ENCODE measurements at regions of chr22 and their contacts with region 1.

Region 1: DNA sequence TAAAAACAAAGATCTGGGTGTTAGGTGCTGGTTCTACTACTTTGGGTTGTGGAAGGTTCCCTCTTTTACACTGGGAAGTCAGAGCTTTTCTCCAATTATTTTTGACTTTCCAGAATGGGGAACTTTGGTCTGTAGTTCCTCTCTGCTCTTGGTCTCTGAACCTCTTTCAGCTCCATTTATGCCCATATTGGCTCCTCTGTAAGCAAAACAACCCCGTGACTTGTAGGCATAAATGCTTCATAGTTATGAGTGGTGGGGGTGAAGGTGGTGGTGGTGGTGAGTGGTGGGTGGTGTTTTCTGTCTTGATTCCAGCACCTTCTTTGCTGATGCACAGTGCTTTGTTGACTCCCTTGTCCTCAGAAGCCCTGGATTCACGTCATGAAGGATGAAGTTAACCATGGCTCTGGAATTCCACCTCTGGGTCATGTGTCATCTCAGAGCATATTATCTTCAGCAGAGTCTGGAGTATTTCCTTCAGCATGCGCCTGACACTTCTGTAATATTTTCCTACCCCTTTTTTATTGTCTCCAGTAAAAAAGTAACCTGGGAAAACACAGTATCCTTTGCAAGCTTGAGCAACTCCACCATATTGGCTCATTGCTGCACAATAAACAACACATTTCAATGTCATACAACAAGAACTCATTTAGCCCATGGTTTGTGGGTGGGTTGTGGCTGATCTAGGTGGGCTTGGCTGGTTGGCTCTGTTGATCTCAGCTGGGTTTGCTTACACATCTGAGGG is 24.1 kb upstream of the GRK3 start:
- DNase-seq: no peak
- H3K4me3 ChIP-seq: no peak overlapping the region
- H3K27ac ChIP-seq: no peak overlapping the region
- H3K4me1 ChIP-seq: no peaks in the 10 kb centered on the region
- H3K27me3 ChIP-seq: no peaks in the 10 kb centered on the region
- CTCF ChIP-seq: no peak

Region 2: DNA sequence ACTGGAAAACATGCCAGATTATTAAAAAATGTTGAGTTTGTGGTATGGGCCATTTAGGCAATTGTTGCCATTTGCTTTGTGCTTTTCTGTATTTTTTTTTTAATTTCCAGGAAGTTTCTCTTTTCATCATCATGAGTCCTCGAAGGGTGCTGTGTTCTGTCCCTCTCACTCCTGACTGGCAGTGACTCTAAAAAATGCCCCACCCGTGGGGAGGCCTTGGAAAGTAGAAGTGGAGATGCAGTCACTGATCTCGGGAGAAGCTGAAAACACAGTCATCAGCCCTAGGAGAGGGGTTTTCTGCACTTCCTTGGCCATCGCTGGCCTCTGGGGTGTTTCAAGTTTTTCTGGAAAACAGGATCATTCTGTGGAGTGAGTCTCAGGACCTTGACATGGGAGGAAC is 74.4 kb before region 1 on chr22:
- CTCF ChIA-PET with region 1: no interaction called
- dilution Hi-C with region 1: no loop called
- in situ Hi-C with region 1: no loop called
- intact Hi-C with region 1: loop called (anchors 5 kb)
- DNase-seq: no peak
- H3K4me3 ChIP-seq: no peak overlapping the region
- H3K27ac ChIP-seq: no peak overlapping the region
- H3K4me1 ChIP-seq: no peaks in the 10 kb centered on the region
- H3K27me3 ChIP-seq: no peaks in the 10 kb centered on the region
- CTCF ChIP-seq: no peak

Measured in mammary epithelial cell (primary cell).